Posterior vena cava (tissue), 2 donors: ENCODE measurements at regions of chr7 and their contacts with region 1.

Region 1: GRCh38 chr7:80918909-80919662 is at the start of gene SEMA3C:
- DNase-seq: peak; percentile 97
- total RNA-seq, gene SEMA3C: 36.3 to 89.3 TPM

Region 2: GRCh38 chr7:80770675-80771081 is 148.4 kb before region 1 on chr7:
- intact Hi-C with region 1: no loop called
- DNase-seq: no peak

Region 3: GRCh38 chr7:81256991-81257390 is 337.9 kb after region 1 on chr7:
- intact Hi-C with region 1: loop called in 1 of 2 experiments (anchors 10 kb)
- DNase-seq: no peak